CD4-positive, alpha-beta memory T cell (primary cell): ENCODE measurements at regions of chr17 and their contacts with region 1.

Region 1: DNA sequence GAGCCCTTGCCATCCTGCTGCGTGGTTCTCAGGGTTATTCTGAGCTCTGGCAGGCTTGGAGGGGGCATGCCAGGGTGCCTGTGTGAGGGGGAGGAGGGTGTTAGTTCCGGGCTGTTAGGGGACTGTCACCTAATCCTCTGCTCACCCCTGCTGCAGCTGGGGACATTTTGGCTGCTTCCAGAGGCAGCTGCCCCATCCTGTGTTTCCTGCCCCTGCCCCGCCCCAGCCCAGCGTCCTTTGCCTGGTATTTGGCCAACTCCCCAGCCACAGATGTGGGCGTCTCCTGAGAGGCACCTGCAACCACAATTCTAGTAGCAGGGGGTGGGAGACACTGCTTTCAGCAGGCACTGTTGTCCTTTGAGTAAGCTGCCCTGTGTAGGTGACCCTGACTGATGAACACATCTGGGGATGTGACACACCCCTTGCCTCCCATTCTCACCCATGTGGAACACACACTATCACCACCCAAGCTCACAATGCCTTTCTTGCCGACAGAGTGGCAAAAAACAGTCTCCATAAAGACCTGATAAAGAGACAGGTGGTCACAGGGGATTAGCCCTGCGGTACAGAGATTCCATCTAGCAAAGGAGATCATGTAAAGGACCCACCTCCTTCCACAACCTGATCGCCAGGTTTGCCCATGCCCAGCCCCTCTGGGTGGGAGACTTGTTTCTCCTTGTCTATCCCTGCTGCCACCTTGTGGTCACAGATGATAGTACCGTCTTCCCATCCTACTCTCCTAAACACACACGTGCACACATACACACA is at the start of gene CHRNE:
- DNase-seq: peak; percentile 75 to 87 (median 79)
- H3K4me3 ChIP-seq: no peak within 1 kb of the TSS
- H3K4me3 Mint-ChIP-seq: peak within 1 kb of the TSS; percentile 24 to 80 (median 69)
- H3K27ac ChIP-seq: no peak within 1 kb of the TSS
- H3K27ac Mint-ChIP-seq: peak within 1 kb of the TSS; percentile 83 to 94 (median 90)
- H3K4me1 ChIP-seq: peaks cover 41% of the 10 kb centered on the region
- H3K4me1 Mint-ChIP-seq: peaks cover 19 to 45% (median 37%) of the 10 kb centered on the region in 4 donors
- H3K27me3 ChIP-seq: no peaks in the 10 kb centered on the region
- H3K27me3 Mint-ChIP-seq: peaks cover 0 to 2% of the 10 kb centered on the region in 2 donors
- total RNA-seq, gene CHRNE: 0.64 to 1.3 TPM

Region 2: DNA sequence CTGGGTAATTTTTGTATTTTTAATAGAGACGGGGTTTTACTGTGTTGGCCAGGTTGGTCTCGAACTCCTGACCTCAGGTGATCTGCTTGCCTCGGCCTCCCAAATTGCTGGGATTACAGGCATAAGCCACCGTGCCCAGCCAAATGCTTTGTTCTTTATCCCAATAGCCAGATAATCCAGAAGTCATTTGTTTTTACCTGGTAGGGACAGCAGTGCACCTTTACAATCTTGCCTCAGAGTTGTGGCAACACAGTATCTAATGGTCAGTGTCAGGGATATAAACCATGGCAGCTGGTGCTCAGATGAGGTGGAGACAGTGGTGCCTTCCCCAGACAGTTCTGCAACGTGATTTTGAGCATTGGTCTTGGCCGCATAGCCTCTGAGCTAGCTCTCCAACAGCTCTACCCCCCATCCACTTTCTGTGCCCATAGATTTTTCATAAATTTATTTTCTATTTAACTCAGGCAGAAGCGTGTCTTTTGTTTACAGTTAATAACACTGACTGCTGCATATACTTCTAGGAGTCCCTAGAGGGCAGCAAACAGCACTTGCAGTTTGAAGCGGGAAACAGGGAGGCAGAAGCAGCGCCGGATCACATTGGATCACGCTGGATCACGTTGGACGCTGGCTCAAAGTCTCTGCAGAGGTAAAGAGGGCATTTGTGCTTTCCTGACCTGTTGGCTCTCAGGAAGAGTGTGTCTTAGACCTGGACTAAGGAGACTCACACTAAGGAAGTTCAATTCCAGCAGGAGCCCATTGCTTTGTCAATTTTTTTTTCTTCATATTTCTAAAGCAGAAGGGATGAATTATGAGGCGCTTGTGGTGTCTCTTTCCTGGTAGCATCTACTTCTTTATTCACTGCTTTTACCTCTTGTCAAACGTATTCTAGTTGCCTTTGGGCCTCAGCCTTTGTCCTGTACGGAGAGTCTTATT is 337.8 kb before region 1 on chr17:
- CTCF ChIA-PET with region 1: interaction called, 4 read pairs
- POLR2A ChIA-PET with region 1: no interaction called
- intact Hi-C with region 1: loop called (anchors 5 kb)
- DNase-seq: peak; percentile 49 to 59 (median 56)
- H3K4me3 ChIP-seq: no peak overlapping the region
- H3K4me3 Mint-ChIP-seq: peak overlapping the region in 7 of 8 donors; percentile 54 to 81 (median 74)
- H3K27ac ChIP-seq: no peak overlapping the region
- H3K27ac Mint-ChIP-seq: peak overlapping the region; percentile 8 to 77 (median 27)
- H3K4me1 ChIP-seq: peaks cover 23% of the 10 kb centered on the region
- H3K4me1 Mint-ChIP-seq: peaks cover 27 to 47% (median 35%) of the 10 kb centered on the region in 4 donors
- H3K27me3 ChIP-seq: no peaks in the 10 kb centered on the region
- H3K27me3 Mint-ChIP-seq: peaks cover 0 to 1% of the 10 kb centered on the region in 2 donors

Region 3: DNA sequence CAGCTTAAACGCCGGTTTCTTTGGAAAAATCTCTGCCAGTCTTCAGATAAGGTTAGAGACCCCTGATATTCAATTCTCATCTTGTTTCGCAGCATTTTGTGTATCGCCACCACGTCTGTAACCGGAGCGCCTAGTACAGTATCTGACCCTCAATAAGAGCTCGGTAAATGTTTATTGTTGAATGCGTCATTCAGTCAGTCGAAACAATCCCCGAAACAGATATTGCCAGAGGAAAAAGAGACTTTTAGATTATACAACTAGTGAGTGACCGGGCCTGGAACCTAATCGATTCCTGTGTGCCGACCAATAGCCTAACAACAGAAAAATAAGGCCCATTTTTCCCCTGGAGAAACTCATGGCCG is 199.9 kb before region 1 on chr17:
- CTCF ChIA-PET with region 1: interaction called, 23 read pairs
- POLR2A ChIA-PET with region 1: interaction called, 14 read pairs
- intact Hi-C with region 1: no loop called
- DNase-seq: no peak
- H3K4me3 ChIP-seq: peak overlapping the region; percentile 87 to 98
- H3K4me3 Mint-ChIP-seq: peak overlapping the region; percentile 75 to 92 (median 90)
- H3K27ac ChIP-seq: peak overlapping the region; percentile 71
- H3K27ac Mint-ChIP-seq: peak overlapping the region; percentile 93 to 97 (median 94)
- H3K4me1 ChIP-seq: peaks cover 30% of the 10 kb centered on the region
- H3K4me1 Mint-ChIP-seq: peaks cover 31 to 58% (median 40%) of the 10 kb centered on the region in 4 donors
- H3K27me3 ChIP-seq: no peaks in the 10 kb centered on the region
- H3K27me3 Mint-ChIP-seq: no peaks in the 10 kb centered on the region

Region 4: DNA sequence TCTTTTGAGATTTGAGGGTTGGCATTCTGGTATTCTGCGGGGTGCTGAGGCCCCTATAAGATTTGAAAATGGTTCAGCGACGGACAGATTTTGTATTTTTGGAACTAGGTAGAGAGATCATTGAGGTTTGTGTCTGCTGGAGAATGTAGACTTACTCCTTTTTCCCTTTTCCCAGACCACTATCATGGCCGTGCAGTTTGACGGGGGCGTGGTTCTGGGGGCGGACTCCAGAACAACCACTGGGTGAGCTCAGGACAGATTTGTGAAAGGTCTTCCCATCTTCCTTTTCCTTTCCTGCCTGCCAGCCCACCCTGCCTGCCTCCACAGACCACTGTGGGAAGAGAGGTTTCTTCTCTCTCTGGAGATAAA is 106.7 kb before region 1 on chr17:
- CTCF ChIA-PET with region 1: interaction called, 6 read pairs
- POLR2A ChIA-PET with region 1: interaction called, 5 read pairs
- intact Hi-C with region 1: loop called (anchors 2 kb)
- DNase-seq: no peak
- H3K4me3 ChIP-seq: peak overlapping the region; percentile 62 to 90
- H3K4me3 Mint-ChIP-seq: peak overlapping the region; percentile 99 to 100 (median 100)
- H3K27ac ChIP-seq: peak overlapping the region; percentile 83
- H3K27ac Mint-ChIP-seq: peak overlapping the region; percentile 90 to 99 (median 98)
- H3K4me1 ChIP-seq: peaks cover 10% of the 10 kb centered on the region
- H3K4me1 Mint-ChIP-seq: peaks cover 11 to 16% (median 11%) of the 10 kb centered on the region in 4 donors
- H3K27me3 ChIP-seq: no peaks in the 10 kb centered on the region
- H3K27me3 Mint-ChIP-seq: no peaks in the 10 kb centered on the region

Region 5: DNA sequence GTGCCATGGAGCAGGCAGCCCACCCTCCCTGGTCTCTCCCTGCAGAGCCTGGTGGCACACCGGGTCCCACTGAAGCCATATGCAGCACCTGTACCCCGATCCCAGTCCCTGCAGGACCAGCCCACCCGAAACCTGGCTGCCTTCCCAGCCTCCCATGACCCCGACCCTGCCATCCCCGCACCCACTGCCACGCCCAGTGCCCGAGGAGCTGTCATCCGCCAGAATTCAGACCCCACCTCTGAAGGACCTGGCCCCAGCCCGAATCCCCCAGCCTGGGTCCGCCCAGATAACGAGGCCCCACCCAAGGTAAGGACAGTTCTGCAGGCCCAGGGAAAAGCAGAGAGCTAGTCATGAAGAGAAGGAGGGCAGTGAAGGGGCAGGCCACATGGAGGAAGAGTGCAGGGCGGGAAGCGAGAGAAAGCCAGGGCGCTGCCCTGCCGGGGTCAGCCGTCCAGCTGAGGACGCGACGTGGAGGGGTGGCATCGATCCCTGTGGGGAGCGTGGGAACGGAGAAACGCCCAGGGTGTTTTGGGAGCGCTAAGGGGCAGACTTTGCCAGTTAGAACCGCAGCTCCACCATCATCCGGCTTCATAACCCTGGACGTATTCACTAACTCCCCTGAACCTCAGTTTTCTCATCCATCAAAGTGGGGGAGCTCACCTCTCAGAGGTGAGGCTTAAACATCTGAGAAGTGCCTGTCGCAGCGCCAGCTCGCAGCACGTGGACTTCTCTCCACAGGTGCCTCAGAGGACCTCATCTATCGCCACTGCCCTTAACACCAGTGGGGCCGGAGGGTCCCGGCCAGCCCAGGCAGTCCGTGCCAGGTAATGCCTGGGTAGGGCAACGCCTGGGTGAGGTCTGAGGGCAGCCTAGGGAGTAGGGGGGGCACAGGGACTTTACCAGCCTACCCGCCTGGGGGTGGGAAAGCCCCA is 11.6 kb before region 1 on chr17:
- CTCF ChIA-PET with region 1: interaction called, 10 read pairs
- POLR2A ChIA-PET with region 1: interaction called, 15 read pairs
- intact Hi-C with region 1: no loop called
- DNase-seq: no peak
- H3K4me3 ChIP-seq: no peak overlapping the region
- H3K4me3 Mint-ChIP-seq: no peak overlapping the region
- H3K27ac ChIP-seq: no peak overlapping the region
- H3K27ac Mint-ChIP-seq: no peak overlapping the region
- H3K4me1 ChIP-seq: no peaks in the 10 kb centered on the region
- H3K4me1 Mint-ChIP-seq: peaks cover 0 to 6% (median 2%) of the 10 kb centered on the region in 4 donors
- H3K27me3 ChIP-seq: no peaks in the 10 kb centered on the region
- H3K27me3 Mint-ChIP-seq: no peaks in the 10 kb centered on the region

Region 6: DNA sequence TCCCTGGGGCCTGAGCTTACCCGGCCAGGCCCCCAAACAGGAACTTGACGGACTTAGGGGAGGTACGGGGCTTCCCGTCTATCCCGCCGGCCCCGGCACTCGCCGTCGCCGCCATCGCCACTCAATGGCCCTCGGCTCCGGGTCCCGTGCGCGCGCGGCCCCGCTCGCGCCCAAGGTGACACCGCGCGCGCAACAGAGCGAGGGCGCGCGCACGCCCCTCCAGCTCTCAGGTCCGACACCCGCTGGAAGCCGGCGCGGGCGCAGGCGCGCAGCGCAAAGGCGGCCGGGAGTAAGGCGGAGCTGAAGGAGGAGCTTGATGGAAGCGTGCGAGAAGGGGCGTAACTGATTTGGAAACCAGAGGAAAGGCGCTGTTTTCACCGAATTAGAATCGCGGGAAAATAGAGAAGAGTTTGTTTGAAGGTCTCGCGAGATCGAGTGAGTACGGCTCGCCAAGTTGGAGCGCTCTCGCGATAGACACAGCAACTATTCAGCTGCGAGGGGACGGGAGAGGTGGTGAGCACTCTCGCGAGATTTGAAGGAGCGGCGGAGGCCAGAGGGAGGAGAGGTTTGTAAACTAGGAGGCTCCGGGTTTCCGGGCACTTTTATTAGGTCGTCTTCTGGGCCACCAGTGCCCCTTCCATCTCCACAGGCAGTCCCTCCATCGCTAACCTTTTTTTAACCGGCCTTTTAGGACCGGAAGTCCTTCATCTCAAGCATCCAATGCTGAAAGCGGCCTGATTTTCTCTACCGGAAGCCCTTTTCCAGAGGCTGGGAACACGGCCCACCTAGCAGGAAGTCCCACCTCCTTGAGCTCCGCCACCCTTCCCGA is 36.8 kb after region 1 on chr17 and contains the starts of genes RNF167 and SLC25A11:
- CTCF ChIA-PET with region 1: interaction called, 10 read pairs
- POLR2A ChIA-PET with region 1: interaction called, 40 read pairs
- intact Hi-C with region 1: loop called (anchors 2 kb)
- DNase-seq: peak; percentile 96 to 99 (median 99)
- H3K4me3 ChIP-seq: peak within 1 kb of the TSS; percentile 99
- H3K4me3 Mint-ChIP-seq: peak within 1 kb of the TSS; percentile 95 to 100 (median 98)
- H3K27ac ChIP-seq: peak within 1 kb of the TSS; percentile 81
- H3K27ac Mint-ChIP-seq: peak within 1 kb of the TSS; percentile 92 to 100 (median 98)
- H3K4me1 ChIP-seq: peaks cover 57% of the 10 kb centered on the region
- H3K4me1 Mint-ChIP-seq: peaks cover 43 to 72% (median 55%) of the 10 kb centered on the region in 4 donors
- H3K27me3 ChIP-seq: no peaks in the 10 kb centered on the region
- H3K27me3 Mint-ChIP-seq: no peaks in the 10 kb centered on the region
- total RNA-seq, gene RNF167: 154 to 172 TPM
- total RNA-seq, gene SLC25A11: 43.5 to 49.5 TPM

Region 7: GRCh38 chr17:4948931-4949320 is 45.7 kb after region 1 on chr17:
- CTCF ChIA-PET with region 1: interaction called, 33 read pairs
- POLR2A ChIA-PET with region 1: interaction called, 26 read pairs
- intact Hi-C with region 1: no loop called
- DNase-seq: peak in 4 of 5 donors; percentile 78 to 82 (median 80)
- H3K4me3 ChIP-seq: peak overlapping the region; percentile 61 to 94
- H3K4me3 Mint-ChIP-seq: peak overlapping the region; percentile 95 to 100 (median 99)
- H3K27ac ChIP-seq: peak overlapping the region; percentile 94
- H3K27ac Mint-ChIP-seq: peak overlapping the region; percentile 92 to 100 (median 98)
- H3K4me1 ChIP-seq: peaks cover 43% of the 10 kb centered on the region
- H3K4me1 Mint-ChIP-seq: peaks cover 24 to 63% (median 39%) of the 10 kb centered on the region in 4 donors
- H3K27me3 ChIP-seq: no peaks in the 10 kb centered on the region
- H3K27me3 Mint-ChIP-seq: no peaks in the 10 kb centered on the region